HEK293 (cell line): ENCODE measurements at regions of chr1 and their contacts with region 1.

Region 1: GRCh38 chr1:20829531-20829930 is 42.4 kb upstream of the HP1BP3 start:
- H3K4me3 ChIP-seq: no peak overlapping the region
- H3K27ac ChIP-seq: no peak overlapping the region
- H3K4me1 ChIP-seq: peaks cover 5% of the 10 kb centered on the region
- CTCF ChIP-seq: no peak

Region 2: DNA sequence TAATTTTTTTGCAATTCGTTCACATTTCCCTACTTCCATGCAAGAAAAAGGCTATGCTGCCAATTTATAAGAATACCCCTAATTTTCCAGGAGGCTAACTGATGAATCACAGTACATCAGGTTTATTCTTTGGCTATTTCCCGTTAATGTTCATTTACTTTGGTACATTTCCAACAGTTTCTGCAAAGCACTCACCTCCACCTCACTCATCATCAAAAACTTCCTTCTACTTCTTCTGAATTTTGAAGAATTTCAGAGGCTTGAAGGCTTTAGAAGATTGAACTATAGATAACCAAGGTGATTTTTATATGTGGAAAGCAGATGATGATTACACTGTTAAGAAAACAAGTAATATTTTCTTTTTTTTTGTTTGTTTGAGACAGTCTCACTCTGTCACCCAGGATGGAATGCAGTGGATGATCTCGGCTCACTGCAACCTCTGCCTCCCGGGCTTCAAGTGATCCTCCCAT is 18.1 kb after region 1 on chr1:
- CTCF ChIA-PET with region 1: no interaction called
- POLR2A ChIA-PET with region 1: no interaction called
- H3K4me3 ChIP-seq: no peak overlapping the region
- H3K27ac ChIP-seq: no peak overlapping the region
- H3K4me1 ChIP-seq: no peaks in the 10 kb centered on the region
- CTCF ChIP-seq: no peak

Region 3: GRCh38 chr1:20885121-20885520 is 55.6 kb after region 1 on chr1:
- CTCF ChIA-PET with region 1: no interaction called
- POLR2A ChIA-PET with region 1: no interaction called
- H3K4me3 ChIP-seq: no peak overlapping the region
- H3K27ac ChIP-seq: no peak overlapping the region
- H3K4me1 ChIP-seq: no peaks in the 10 kb centered on the region
- CTCF ChIP-seq: no peak

Region 4: DNA sequence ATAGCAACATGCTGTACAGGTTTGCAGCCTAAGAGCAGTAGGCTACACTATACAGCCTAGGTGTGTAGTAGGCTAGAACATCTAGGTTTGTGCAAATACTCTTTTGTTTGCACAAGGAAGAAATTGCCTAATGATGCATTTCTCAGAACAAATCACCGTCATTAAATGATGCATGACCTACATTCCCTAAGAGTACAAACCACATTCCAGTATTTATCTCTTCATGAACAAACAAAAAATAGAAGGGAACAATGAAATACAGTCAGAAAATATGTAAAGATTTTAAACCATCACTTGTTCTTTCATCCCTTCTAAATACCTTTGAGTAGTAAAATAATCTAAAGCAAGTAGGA is 67.3 kb after region 1 on chr1:
- CTCF ChIA-PET with region 1: no interaction called
- POLR2A ChIA-PET with region 1: no interaction called
- H3K4me3 ChIP-seq: no peak overlapping the region
- H3K27ac ChIP-seq: no peak overlapping the region
- H3K4me1 ChIP-seq: no peaks in the 10 kb centered on the region
- CTCF ChIP-seq: no peak

Region 5: DNA sequence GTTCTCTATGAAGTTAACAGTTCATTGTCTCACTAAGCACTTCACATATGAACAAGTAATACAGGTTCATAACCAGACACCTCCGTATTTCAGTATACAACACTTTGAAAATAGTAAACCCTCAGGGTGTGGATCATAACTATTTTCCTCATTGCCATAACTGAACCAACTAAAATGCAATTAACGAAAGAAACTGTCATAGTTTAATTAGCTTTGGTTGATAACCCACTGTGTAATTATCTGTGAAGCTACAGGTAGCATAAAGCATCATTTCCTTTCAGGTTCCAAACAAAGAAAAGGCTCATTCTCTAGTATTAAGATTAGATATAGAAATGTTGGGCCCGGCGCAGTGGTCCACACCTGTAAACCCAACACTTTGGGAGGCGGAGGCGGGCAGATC is 288.6 kb after region 1 on chr1:
- CTCF ChIA-PET with region 1: no interaction called
- POLR2A ChIA-PET with region 1: interaction called, 10 read pairs
- H3K4me3 ChIP-seq: no peak overlapping the region
- H3K27ac ChIP-seq: no peak overlapping the region
- H3K4me1 ChIP-seq: no peaks in the 10 kb centered on the region; the same call in 1 of the 2 replicates
- CTCF ChIP-seq: no peak